PC-9 (cell line): ENCODE measurements at regions of chr4 and their contacts with region 1.

Region 1: GRCh38 chr4:73341454-73341853 is 62.6 kb upstream of the ALB start:
- DNase-seq: peak in 1 of 2 experiments; percentile 4
- H3K4me3 ChIP-seq: no peak overlapping the region
- H3K27ac ChIP-seq: no peak overlapping the region
- H3K4me1 ChIP-seq: no peaks in the 10 kb centered on the region
- H3K27me3 ChIP-seq: no peaks in the 10 kb centered on the region
- CTCF ChIP-seq: peak; percentile 45

Region 2: DNA sequence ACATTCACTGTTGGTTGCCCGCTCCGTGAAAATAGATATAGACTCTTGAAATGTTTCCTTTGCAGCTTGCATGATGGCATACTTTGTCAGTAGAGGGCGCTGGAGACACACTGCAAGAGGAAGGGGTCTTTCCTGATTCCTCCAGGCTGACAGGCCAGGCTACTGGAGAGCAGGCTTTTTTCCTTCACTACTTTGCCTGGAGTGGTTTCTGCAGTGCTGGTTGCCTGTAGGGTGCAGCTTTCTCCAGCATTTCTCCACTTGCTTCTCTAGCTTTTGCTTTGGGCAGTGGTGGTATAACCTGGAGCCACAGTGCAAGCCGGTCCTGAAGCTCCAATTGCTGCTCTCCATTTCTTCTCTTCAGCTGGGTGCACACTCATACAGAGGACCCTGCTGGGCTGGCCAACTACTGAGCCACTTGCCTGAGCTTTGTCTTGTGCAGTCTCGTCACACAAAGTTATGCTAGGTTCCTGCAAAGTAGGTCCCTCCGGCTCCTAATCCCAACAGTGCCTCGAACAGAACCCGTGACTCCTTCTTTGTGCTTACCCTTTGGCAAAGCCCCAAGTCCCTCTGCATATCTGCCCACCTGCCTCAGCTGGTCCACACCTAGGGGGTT is 232.4 kb after region 1 on chr4:
- CTCF ChIA-PET with region 1: no interaction called
- POLR2A ChIA-PET with region 1: no interaction called
- intact Hi-C with region 1: loop called (anchors 10 kb)
- DNase-seq: peak in 1 of 2 experiments; percentile 44
- H3K4me3 ChIP-seq: no peak overlapping the region
- H3K27ac ChIP-seq: no peak overlapping the region
- H3K4me1 ChIP-seq: no peaks in the 10 kb centered on the region
- H3K27me3 ChIP-seq: no peaks in the 10 kb centered on the region
- CTCF ChIP-seq: peak; percentile 72

Region 3: GRCh38 chr4:73653695-73654106 is 312.2 kb after region 1 on chr4:
- CTCF ChIA-PET with region 1: interaction called, 3 read pairs
- POLR2A ChIA-PET with region 1: no interaction called
- intact Hi-C with region 1: loop called (anchors 1 kb)
- DNase-seq: no peak
- H3K4me3 ChIP-seq: no peak overlapping the region
- H3K27ac ChIP-seq: no peak overlapping the region
- H3K4me1 ChIP-seq: no peaks in the 10 kb centered on the region
- H3K27me3 ChIP-seq: no peaks in the 10 kb centered on the region
- CTCF ChIP-seq: peak; percentile 70

Region 4: DNA sequence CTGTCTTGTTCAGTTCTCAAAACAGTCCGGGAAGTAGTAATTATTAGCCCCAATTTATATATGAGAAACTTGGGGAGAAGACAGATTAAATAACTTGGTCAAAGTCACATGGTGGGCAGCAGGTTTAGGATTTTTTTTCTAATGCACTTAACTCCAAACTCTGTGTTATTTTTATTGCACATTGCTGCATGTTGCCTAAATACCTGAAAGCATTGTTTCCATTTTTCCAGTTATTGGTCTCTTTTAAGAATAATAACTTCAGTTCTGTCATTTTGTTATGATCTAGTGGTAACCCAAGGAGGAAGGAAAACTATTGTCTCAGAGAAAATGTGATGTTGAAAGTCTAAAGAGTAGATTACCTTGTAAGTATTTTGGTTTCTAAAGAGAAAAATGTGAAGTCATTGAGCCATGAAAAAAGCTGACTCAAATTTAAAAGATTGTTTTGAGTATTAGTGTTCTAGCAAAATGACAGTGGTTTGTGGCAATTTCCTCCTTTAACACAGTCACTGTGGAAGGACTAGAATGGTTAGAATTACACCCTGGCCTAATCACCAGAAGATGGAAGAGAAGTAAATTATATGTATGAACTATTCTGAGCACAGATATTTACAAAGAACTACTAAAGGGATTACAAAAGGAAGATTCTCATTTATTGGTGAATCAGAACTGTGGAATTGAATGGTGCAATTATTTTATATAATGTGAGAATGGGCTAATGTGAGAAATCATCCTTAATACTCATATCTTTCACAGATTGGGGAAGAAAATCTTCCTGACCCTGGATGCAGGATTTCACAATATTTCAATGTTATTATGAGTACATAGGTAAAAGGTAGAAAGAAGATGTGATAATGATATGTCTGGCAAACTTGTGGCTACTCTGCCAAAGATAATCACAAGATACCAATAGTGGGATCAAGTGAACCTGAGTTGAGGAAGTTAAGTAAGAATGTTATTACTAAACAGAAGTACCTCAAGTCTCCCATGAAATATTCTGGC is 377.2 kb after region 1 on chr4:
- CTCF ChIA-PET with region 1: no interaction called
- POLR2A ChIA-PET with region 1: no interaction called
- intact Hi-C with region 1: no loop called
- DNase-seq: peak in 1 of 2 experiments; percentile 49
- H3K4me3 ChIP-seq: no peak overlapping the region
- H3K27ac ChIP-seq: peak overlapping the region; percentile 65
- H3K4me1 ChIP-seq: no peaks in the 10 kb centered on the region; the same call in 1 of the 2 replicates
- H3K27me3 ChIP-seq: no peaks in the 10 kb centered on the region
- CTCF ChIP-seq: no peak

Region 5: GRCh38 chr4:73869130-73870050 is 527.9 kb after region 1 on chr4 and contains the start of gene CXCL1:
- CTCF ChIA-PET with region 1: no interaction called
- POLR2A ChIA-PET with region 1: no interaction called
- intact Hi-C with region 1: loop called (anchors 5 kb)
- DNase-seq: peak in 1 of 2 experiments; percentile 15
- H3K4me3 ChIP-seq: peak within 1 kb of the TSS; percentile 65
- H3K27ac ChIP-seq: no peak within 1 kb of the TSS
- H3K4me1 ChIP-seq: no peaks in the 10 kb centered on the region; the same call in 1 of the 2 replicates
- H3K27me3 ChIP-seq: no peaks in the 10 kb centered on the region
- CTCF ChIP-seq: no peak
- total RNA-seq, gene CXCL1: 0.33 TPM in 1 of 2 replicates, not detected in the other

Region 6: DNA sequence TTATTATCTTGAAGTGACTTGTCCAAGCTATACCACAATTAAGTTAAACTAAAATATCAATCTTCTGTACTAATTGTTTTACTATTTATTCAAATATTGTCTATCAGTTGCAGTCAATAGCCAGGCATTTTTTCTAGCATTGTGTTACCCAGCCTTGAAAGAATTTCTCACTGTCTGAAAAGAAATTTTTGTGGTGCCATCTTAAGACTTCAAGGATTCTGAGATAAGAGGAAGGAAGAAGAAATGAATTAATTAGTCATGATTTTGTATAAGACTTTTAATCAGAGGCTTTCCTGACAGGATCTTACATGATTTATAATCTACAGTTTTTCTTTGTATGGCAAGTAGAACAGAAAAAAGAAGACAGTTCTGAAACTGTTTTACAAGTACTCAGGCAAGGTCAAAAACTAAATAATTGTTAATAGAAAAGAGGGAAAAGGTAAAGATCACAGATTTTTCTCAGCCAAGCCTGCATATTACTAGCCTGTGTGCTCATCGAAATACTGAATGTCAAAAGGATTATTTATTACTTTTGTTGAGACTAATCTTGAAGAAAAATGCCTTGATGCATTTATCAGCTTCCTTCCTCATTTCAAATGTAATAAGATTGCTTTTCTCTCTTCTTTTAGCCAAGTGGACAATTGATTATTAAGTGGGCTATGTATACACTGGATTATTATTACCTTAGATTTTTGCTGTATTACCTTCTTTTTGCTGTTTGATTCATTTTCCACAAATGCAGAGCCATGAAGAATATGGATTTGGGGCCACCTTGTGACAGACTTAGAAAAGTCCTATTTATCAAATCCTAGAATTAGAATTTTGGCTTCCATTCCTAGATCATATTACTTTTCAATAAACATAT is 581.5 kb after region 1 on chr4:
- CTCF ChIA-PET with region 1: no interaction called
- POLR2A ChIA-PET with region 1: no interaction called
- intact Hi-C with region 1: loop called (anchors 2 kb)
- DNase-seq: no peak
- H3K4me3 ChIP-seq: no peak overlapping the region
- H3K27ac ChIP-seq: no peak overlapping the region
- H3K4me1 ChIP-seq: 0 out of 2 replicates have a peak, but pooled peaks cover under 1% of the 10 kb centered on the region
- H3K27me3 ChIP-seq: no peaks in the 10 kb centered on the region
- CTCF ChIP-seq: peak; percentile 61